ENCODE measurements at regions of chr16 and their contacts with region 1.

Region 1: GRCh38 chr16:87790278-87791032 is 24.7 kb upstream of the KLHDC4 start:
- DNase-seq: no peak
- H3K4me3 ChIP-seq: no peak overlapping the region
- H3K4me3 Mint-ChIP-seq: no peak overlapping the region
- H3K27ac Mint-ChIP-seq: peak overlapping the region; percentile 91
- H3K4me1 ChIP-seq: peaks cover 52% of the 10 kb centered on the region
- H3K4me1 Mint-ChIP-seq: peaks cover 54% of the 10 kb centered on the region
- H3K27me3 ChIP-seq: no peaks in the 10 kb centered on the region
- H3K27me3 Mint-ChIP-seq: no peaks in the 10 kb centered on the region
- CTCF ChIP-seq: no peak

Region 2: DNA sequence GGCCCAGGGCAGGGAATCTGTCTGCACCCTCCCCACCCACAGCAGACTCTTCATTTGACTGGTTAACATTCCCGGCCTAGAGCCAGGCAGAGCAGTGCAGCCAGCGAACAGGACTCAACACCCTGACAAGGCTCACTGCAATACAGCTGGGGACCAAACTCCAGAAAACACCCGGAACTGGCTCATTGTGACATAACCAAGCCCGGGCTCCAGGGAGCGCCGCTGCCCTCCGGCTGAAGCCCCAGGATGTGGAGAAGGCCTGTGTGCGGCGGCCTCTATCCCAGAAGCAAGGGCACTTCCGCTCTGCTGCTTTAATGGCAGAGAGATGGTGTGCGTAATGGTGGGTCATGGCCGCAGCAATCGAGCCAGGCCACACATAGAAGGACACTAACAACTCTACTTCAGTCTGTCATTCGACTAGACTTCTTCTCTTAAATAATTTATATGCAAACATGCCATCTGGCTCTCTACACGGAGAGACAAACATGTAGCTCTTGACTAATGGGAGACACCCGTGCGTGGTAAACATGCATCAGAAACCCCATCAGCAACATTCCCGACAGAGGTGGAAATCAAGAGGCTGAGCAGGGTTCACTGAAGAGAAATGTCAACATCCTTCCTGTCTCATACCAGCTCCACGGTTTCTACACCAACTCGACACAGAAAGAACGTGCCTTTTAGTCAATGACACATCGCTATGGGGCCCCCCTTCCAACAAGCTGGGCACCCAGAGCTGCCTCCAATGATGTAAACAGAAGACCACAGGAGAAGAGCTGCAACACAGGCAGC is 42.6 kb before region 1 on chr16:
- CTCF ChIA-PET with region 1: no interaction called
- POLR2A ChIA-PET with region 1: no interaction called
- intact Hi-C with region 1: no loop called
- DNase-seq: peak in 1 of 2 experiments; percentile 40
- H3K4me3 ChIP-seq: no peak overlapping the region
- H3K4me3 Mint-ChIP-seq: no peak overlapping the region
- H3K27ac Mint-ChIP-seq: no peak overlapping the region
- H3K4me1 ChIP-seq: no peaks in the 10 kb centered on the region
- H3K4me1 Mint-ChIP-seq: no peaks in the 10 kb centered on the region
- H3K27me3 ChIP-seq: no peaks in the 10 kb centered on the region
- H3K27me3 Mint-ChIP-seq: no peaks in the 10 kb centered on the region
- CTCF ChIP-seq: peak in 1 of 2 experiments; percentile 13

Region 3: GRCh38 chr16:87806603-87807546 is 16.4 kb after region 1 on chr16:
- CTCF ChIA-PET with region 1: interaction called, 4 read pairs
- POLR2A ChIA-PET with region 1: no interaction called
- intact Hi-C with region 1: loop called (anchors 2 kb)
- DNase-seq: peak; percentile 78 to 85
- H3K4me3 ChIP-seq: peak overlapping the region; percentile 16
- H3K4me3 Mint-ChIP-seq: peak overlapping the region; percentile 68
- H3K27ac Mint-ChIP-seq: peak overlapping the region; percentile 97
- H3K4me1 ChIP-seq: peaks cover 18% of the 10 kb centered on the region
- H3K4me1 Mint-ChIP-seq: peaks cover 18% of the 10 kb centered on the region
- H3K27me3 ChIP-seq: no peaks in the 10 kb centered on the region
- H3K27me3 Mint-ChIP-seq: no peaks in the 10 kb centered on the region
- CTCF ChIP-seq: no peak